ENCODE measurements at regions of chr5 and their contacts with region 1.

Region 1: GRCh38 chr5:86968301-86968753 is 299.4 kb upstream of the RASA1 start:
- DNase-seq: no peak
- ATAC-seq: no peak
- H3K4me3 Mint-ChIP-seq: no peak overlapping the region
- H3K27ac Mint-ChIP-seq: no peak overlapping the region
- H3K4me1 Mint-ChIP-seq: peaks cover 14% of the 10 kb centered on the region
- H3K27me3 Mint-ChIP-seq: peaks cover 8% of the 10 kb centered on the region

Region 2: DNA sequence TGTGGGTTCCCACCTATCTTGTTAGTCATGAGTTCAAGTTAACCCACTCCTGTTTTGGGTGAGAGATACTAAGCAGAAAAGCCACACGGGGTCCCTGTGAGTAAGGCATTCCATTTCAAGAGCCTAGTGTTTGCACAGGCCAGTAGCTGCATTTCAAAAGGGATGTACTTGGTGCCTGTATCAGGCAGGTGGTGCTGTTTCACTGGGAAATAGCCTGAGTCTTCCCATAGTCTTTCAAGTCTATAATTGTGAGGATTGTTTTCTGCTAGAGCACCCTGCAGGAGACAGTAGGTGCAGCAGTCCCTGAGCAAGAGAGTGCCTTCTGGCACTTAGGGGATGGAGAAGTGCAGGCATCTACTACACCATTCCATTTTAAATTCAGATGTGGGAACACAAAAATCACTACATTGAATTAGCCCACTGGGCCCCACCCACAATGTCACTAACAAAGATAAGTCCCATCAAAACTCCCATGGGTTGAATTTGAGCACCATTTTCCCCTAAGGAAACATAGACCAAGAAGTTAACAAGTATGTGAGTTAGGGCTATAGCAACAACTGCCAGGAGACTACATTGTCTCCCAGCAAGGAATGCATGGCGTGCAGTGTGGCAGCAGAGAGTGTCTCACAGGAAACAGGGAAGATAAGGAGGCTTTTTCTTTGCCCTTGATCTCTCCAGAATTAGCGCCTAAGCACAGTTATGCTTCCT is 87.4 kb before region 1 on chr5:
- CTCF ChIA-PET with region 1: interaction called, 26 read pairs
- DNase-seq: peak; percentile 60
- ATAC-seq: peak; percentile 85
- H3K4me3 Mint-ChIP-seq: no peak overlapping the region
- H3K27ac Mint-ChIP-seq: no peak overlapping the region
- H3K4me1 Mint-ChIP-seq: no peaks in the 10 kb centered on the region
- H3K27me3 Mint-ChIP-seq: peaks cover 5% of the 10 kb centered on the region

Region 3: DNA sequence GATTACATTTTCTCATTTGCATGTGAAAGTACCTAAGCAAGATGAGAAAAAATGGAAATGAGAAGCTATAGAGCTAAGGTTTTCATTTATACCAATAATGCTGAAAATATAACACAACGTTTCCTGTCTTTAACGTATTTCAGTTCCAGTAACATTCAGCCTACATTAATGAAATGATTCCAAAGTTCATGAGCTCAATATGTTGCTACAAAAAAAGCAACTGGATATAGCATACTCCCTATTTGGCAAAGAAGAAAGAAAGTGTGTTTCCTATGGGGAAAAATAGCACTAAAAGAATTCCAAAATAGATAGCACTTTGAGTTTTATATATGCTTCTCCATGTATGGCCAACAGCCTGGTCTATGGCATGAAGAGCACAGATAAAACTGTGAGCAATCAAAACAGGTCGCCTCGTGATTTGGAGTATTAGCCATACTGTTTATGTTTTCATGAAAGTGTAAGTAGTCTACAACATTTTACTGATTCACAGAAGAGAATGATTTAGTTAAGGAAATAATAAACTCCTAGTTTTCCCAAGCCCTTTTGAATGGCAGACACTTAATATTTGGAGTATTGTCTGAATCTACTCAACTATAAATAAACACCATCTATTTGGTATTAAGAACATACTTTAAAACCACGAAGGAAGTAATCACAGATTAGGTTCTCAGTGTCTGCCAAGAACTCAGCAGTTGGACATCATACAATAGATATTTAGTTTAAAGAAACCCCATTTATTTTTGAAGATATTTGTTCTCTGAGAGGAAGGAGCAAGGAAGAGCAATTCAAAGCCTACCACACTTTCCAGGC is 40.6 kb after region 1 on chr5:
- CTCF ChIA-PET with region 1: interaction called, 13 read pairs
- DNase-seq: no peak
- ATAC-seq: no peak
- H3K4me3 Mint-ChIP-seq: no peak overlapping the region
- H3K27ac Mint-ChIP-seq: no peak overlapping the region
- H3K4me1 Mint-ChIP-seq: no peaks in the 10 kb centered on the region
- H3K27me3 Mint-ChIP-seq: no peaks in the 10 kb centered on the region

Measured in activated CD8-positive, alpha-beta memory T cell treated with anti-CD3 and anti-CD28 coated beads, Interleukin-2, amount 10 ng/mL, durations not matched to agents 7 days and 5 days (primary cell).